CD8-positive, alpha-beta T cell (primary cell): ENCODE measurements at regions of chr1 and their contacts with region 1.

Region 1: GRCh38 chr1:153749408-153750005 is 21.7 kb downstream of the INTS3 start:
- DNase-seq: peak; percentile 66 to 85 (median 77)
- ATAC-seq: peak; percentile 100
- H3K4me3 ChIP-seq: no peak overlapping the region
- H3K4me3 Mint-ChIP-seq: no peak overlapping the region
- H3K27ac ChIP-seq: no peak overlapping the region
- H3K27ac Mint-ChIP-seq: no peak overlapping the region
- H3K4me1 ChIP-seq: no peaks in the 10 kb centered on the region
- H3K4me1 Mint-ChIP-seq: peaks cover 4% of the 10 kb centered on the region
- H3K27me3 ChIP-seq: no peaks in the 10 kb centered on the region
- H3K27me3 Mint-ChIP-seq: no peaks in the 10 kb centered on the region
- CTCF ChIP-seq: peak; percentile 97

Region 2: DNA sequence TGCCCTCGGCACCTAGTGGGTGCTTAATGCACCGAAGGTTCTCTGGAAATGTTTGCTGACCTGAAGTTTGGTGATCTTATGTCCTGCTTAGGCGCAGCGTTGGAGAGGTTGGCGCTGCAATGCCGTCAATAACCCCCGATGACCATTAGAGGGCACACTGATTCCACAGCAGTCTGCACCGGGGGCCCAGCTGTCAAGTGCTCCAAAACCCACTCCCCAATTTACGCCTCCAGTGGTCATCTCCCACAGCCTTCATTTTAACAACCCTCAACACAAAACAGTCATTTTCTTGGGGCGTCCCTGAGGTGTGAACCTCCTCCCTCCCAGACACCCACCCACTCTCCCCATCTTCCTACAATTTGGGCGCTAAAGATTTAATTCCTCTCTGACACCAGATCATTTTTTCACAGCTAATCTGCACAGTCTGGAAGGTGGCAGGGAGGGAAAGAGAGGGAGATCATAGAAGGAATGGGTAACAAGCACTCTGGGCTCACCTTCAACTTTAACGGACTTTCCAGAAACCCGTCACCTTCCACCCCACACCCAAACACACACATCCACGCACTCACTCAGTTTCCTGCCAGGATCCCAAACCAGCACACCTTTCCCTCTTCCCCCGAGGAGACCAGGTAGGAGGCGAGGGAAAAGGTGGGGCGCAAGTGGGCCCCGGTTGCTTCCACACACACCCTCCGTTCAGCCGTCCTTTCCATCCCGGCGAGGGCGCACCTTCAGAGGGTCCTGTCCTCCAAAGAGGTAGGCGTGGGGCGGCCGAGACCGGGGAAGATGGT is 71.6 kb before region 1 on chr1:
- CTCF ChIA-PET with region 1: interaction called, 19 read pairs
- POLR2A ChIA-PET with region 1: no interaction called
- intact Hi-C with region 1: loop called (anchors 1 kb)
- DNase-seq: peak in 6 of 9 experiments; percentile 29 to 70 (median 56)
- ATAC-seq: peak; percentile 48
- H3K4me3 ChIP-seq: peak overlapping the region; percentile 33 to 48
- H3K4me3 Mint-ChIP-seq: peak overlapping the region; percentile 91
- H3K27ac ChIP-seq: no peak overlapping the region
- H3K27ac Mint-ChIP-seq: no peak overlapping the region
- H3K4me1 ChIP-seq: peaks cover 25% of the 10 kb centered on the region
- H3K4me1 Mint-ChIP-seq: peaks cover 22% of the 10 kb centered on the region
- H3K27me3 ChIP-seq: peaks cover 29 to 30% of the 10 kb centered on the region in 2 experiments
- H3K27me3 Mint-ChIP-seq: peaks cover 45% of the 10 kb centered on the region
- CTCF ChIP-seq: peak; percentile 75

Region 3: GRCh38 chr1:153783233-153784190 is 34.0 kb after region 1 on chr1:
- CTCF ChIA-PET with region 1: no interaction called
- POLR2A ChIA-PET with region 1: no interaction called
- intact Hi-C with region 1: no loop called
- DNase-seq: peak; percentile 84 to 96 (median 91)
- ATAC-seq: peak; percentile 98
- H3K4me3 ChIP-seq: peak overlapping the region; percentile 91 to 93
- H3K4me3 Mint-ChIP-seq: peak overlapping the region; percentile 88
- H3K27ac ChIP-seq: peak overlapping the region; percentile 92 to 99
- H3K27ac Mint-ChIP-seq: peak overlapping the region; percentile 95
- H3K4me1 ChIP-seq: peaks cover 12% of the 10 kb centered on the region
- H3K4me1 Mint-ChIP-seq: peaks cover 10% of the 10 kb centered on the region
- H3K27me3 ChIP-seq: no peaks in the 10 kb centered on the region
- H3K27me3 Mint-ChIP-seq: no peaks in the 10 kb centered on the region
- CTCF ChIP-seq: no peak